Breast epithelium (tissue), 4 donors: ENCODE measurements at regions of chr18 and their contacts with region 1.

Region 1: GRCh38 chr18:34867520-34867919 is 157.4 kb downstream of the DTNA start:
- DNase-seq: no peak
- H3K4me3 ChIP-seq: no peak overlapping the region
- H3K27ac ChIP-seq: peak overlapping the region in 1 of 2 donors; percentile 26
- H3K4me1 ChIP-seq: no peaks in the 10 kb centered on the region
- H3K27me3 ChIP-seq: no peaks in the 10 kb centered on the region
- CTCF ChIP-seq: no peak
- POLR2A ChIP-seq: no peak

Region 2: GRCh38 chr18:34385311-34385710 is 482.2 kb before region 1 on chr18:
- intact Hi-C with region 1: loop called (anchors 5 kb)
- DNase-seq: no peak
- H3K4me3 ChIP-seq: no peak overlapping the region
- H3K27ac ChIP-seq: no peak overlapping the region
- H3K4me1 ChIP-seq: no peaks in the 10 kb centered on the region
- H3K27me3 ChIP-seq: no peaks in the 10 kb centered on the region
- CTCF ChIP-seq: no peak
- POLR2A ChIP-seq: no peak

Region 3: DNA sequence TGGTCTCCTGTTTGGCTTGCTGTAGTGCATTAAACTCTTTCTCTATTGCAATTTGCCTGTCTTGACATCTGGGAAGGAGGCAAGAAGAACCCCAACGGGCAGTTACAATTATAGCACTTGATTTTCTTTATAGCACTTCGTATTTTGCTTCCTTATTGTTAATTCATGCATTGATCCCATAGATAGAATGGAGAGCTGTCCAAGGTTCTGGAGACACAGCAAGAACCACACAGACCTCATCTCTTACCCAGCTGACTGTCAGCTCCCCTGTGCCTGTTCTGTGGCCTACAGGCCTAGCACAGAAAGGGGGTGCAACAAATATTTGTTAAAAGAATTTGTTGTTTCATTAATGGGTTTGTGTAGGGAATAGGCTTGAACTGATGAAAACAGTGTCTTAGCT is 908.4 kb after region 1 on chr18:
- intact Hi-C with region 1: loop called (anchors 5 kb)
- DNase-seq: no peak
- H3K4me3 ChIP-seq: no peak overlapping the region
- H3K27ac ChIP-seq: no peak overlapping the region
- H3K4me1 ChIP-seq: no peaks in the 10 kb centered on the region
- H3K27me3 ChIP-seq: no peaks in the 10 kb centered on the region
- CTCF ChIP-seq: no peak
- POLR2A ChIP-seq: no peak

Region 4: DNA sequence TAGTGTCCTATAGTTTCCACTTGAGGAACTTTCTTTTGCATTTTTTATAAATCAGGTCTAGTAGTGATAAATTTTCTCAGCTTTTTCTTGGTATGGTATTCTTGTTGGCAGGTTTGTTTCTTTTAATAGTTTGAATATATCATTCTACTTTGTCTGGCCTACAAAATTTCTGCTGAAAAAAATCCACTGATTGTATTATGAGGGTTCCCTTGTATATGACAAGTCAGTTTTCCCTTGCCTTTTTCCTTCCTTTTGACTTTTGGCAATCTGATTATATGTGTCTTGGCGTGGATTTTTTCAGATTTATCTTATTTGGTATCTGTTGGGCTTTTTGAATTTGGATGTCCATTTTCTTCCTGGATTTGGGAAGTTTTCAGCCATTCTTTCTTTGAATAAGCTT is 1361.7 kb after region 1 on chr18:
- intact Hi-C with region 1: no loop called
- DNase-seq: no peak
- H3K4me3 ChIP-seq: no peak overlapping the region
- H3K27ac ChIP-seq: no peak overlapping the region
- H3K4me1 ChIP-seq: no peaks in the 10 kb centered on the region
- H3K27me3 ChIP-seq: no peaks in the 10 kb centered on the region
- CTCF ChIP-seq: no peak
- POLR2A ChIP-seq: no peak